B cell (primary cell): ENCODE measurements at regions of chr1 and their contacts with region 1.

Region 1: GRCh38 chr1:8525558-8526275 is 207.8 kb downstream of the SLC45A1 start:
- DNase-seq: peak; percentile 91
- ATAC-seq: peak; percentile 96
- H3K4me3 ChIP-seq: peak overlapping the region; percentile 1 to 78 (median 60)
- H3K4me3 Mint-ChIP-seq: no peak overlapping the region
- H3K27ac ChIP-seq: peak overlapping the region; percentile 94 to 98
- H3K27ac Mint-ChIP-seq: no peak overlapping the region
- H3K4me1 ChIP-seq: peaks cover 41 to 45% of the 10 kb centered on the region in 2 donors
- H3K4me1 Mint-ChIP-seq: peaks cover 57% of the 10 kb centered on the region
- H3K27me3 ChIP-seq: no peaks in the 10 kb centered on the region
- H3K27me3 Mint-ChIP-seq: no peaks in the 10 kb centered on the region
- CTCF ChIP-seq: no peak

Region 2: DNA sequence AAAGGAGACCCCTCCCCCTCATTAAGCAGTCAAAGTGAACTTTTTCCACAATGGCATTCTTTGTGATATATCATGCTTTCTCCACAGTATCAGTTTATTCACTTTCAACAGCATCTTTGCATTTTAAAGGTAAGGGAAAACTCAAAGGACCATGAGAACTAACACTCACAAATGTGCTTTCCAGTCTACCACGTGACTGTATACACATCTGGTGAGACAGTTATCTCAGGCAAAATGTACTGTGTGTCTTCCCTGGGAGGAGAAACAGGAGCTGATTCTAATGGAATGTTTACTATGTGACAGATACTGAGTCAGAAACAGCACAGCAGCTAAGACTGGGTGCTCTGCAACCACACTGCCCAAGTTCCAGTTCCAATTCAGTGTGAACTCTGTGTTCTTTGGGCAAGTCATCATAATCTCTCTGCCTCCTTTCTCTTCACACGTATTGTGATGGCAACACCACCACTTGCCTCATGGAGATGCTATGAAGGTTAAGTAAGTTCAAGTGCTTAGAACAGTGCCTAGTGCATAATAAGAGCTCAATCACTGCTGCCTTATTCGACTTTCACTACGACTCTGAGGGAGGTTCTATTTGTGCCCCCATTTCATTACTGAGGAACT is 128.8 kb before region 1 on chr1:
- CTCF ChIA-PET with region 1: interaction called, 3 read pairs
- POLR2A ChIA-PET with region 1: no interaction called
- intact Hi-C with region 1: loop called (anchors 5 kb)
- DNase-seq: no peak
- ATAC-seq: no peak
- H3K4me3 ChIP-seq: no peak overlapping the region
- H3K4me3 Mint-ChIP-seq: peak overlapping the region; percentile 14
- H3K27ac ChIP-seq: peak overlapping the region; percentile 56 to 79
- H3K27ac Mint-ChIP-seq: peak overlapping the region; percentile 66
- H3K4me1 ChIP-seq: peaks cover 47 to 52% of the 10 kb centered on the region in 2 donors
- H3K4me1 Mint-ChIP-seq: peaks cover 67% of the 10 kb centered on the region
- H3K27me3 ChIP-seq: no peaks in the 10 kb centered on the region
- H3K27me3 Mint-ChIP-seq: no peaks in the 10 kb centered on the region
- CTCF ChIP-seq: no peak

Region 3: DNA sequence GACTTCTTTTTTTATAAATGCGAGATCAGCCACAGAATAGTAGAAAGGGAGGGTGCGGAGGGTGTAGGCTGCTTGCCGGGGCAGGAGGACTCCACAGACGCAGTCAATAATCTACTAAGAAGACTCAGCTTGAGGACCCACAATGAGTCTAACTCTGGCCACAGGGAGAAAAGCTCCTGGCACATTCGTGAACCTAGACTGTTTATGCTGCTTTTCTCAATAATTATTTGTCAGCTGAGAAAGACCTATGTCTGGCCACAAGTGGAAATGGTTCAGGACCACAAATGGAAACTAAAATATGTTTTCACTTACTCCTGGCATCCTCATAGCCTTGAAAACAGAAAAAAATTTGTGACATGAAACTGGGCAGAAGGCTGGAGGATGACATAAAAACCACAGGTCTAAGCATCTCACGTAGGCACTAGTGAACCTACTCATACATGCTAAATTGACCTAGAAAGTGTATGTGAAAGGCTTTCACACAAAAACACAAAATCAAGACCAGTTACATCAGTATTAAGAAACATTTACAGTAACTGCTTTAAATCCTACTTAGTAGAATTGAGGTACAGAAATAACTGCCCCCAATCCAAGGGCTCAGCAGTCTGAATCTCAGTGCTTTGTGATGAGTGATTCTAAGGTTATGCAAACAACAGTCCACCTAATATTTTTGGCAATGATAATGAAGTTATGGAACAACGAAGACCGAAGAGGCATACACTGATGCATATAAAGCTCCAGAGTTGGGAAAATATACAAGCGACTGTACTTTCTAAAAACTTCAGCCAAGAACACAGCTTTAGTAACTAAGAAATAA is 48.3 kb before region 1 on chr1:
- CTCF ChIA-PET with region 1: no interaction called
- POLR2A ChIA-PET with region 1: no interaction called
- intact Hi-C with region 1: loop called (anchors 10 kb)
- DNase-seq: no peak
- ATAC-seq: no peak
- H3K4me3 ChIP-seq: no peak overlapping the region
- H3K4me3 Mint-ChIP-seq: no peak overlapping the region
- H3K27ac ChIP-seq: peak overlapping the region in 1 of 2 donors; percentile 10
- H3K27ac Mint-ChIP-seq: no peak overlapping the region
- H3K4me1 ChIP-seq: peaks cover 17 to 20% of the 10 kb centered on the region in 2 donors
- H3K4me1 Mint-ChIP-seq: peaks cover 45% of the 10 kb centered on the region
- H3K27me3 ChIP-seq: no peaks in the 10 kb centered on the region
- H3K27me3 Mint-ChIP-seq: no peaks in the 10 kb centered on the region
- CTCF ChIP-seq: no peak

Region 4: GRCh38 chr1:8497210-8497801 is 28.4 kb before region 1 on chr1:
- CTCF ChIA-PET with region 1: no interaction called
- POLR2A ChIA-PET with region 1: interaction called, 5 read pairs
- intact Hi-C with region 1: loop called (anchors 1 kb)
- DNase-seq: peak; percentile 52
- ATAC-seq: peak; percentile 46
- H3K4me3 ChIP-seq: peak overlapping the region in 3 of 5 experiments; percentile 7 to 39 (median 8)
- H3K4me3 Mint-ChIP-seq: peak overlapping the region; percentile 78
- H3K27ac ChIP-seq: peak overlapping the region; percentile 88 to 93
- H3K27ac Mint-ChIP-seq: peak overlapping the region; percentile 91
- H3K4me1 ChIP-seq: peaks cover 50 to 60% of the 10 kb centered on the region in 2 donors
- H3K4me1 Mint-ChIP-seq: peaks cover 61% of the 10 kb centered on the region
- H3K27me3 ChIP-seq: no peaks in the 10 kb centered on the region
- H3K27me3 Mint-ChIP-seq: no peaks in the 10 kb centered on the region
- CTCF ChIP-seq: no peak

Region 5: GRCh38 chr1:8702850-8703810 is 177.4 kb after region 1 on chr1:
- CTCF ChIA-PET with region 1: no interaction called
- POLR2A ChIA-PET with region 1: interaction called, 12 read pairs
- intact Hi-C with region 1: no loop called
- DNase-seq: peak; percentile 88
- ATAC-seq: peak; percentile 72
- H3K4me3 ChIP-seq: peak overlapping the region; percentile 60 to 81 (median 63)
- H3K4me3 Mint-ChIP-seq: peak overlapping the region; percentile 93
- H3K27ac ChIP-seq: peak overlapping the region; percentile 54 to 77
- H3K27ac Mint-ChIP-seq: peak overlapping the region; percentile 93
- H3K4me1 ChIP-seq: peaks cover 32 to 39% of the 10 kb centered on the region in 2 donors
- H3K4me1 Mint-ChIP-seq: peaks cover 61% of the 10 kb centered on the region
- H3K27me3 ChIP-seq: no peaks in the 10 kb centered on the region
- H3K27me3 Mint-ChIP-seq: no peaks in the 10 kb centered on the region
- CTCF ChIP-seq: no peak